HEK293 (cell line): ENCODE measurements at regions of chr1 and their contacts with region 1.

Region 1: GRCh38 chr1:214213136-214213535 is 67.8 kb upstream of the SMYD2 start:
- H3K4me3 ChIP-seq: no peak overlapping the region
- H3K27ac ChIP-seq: no peak overlapping the region
- H3K4me1 ChIP-seq: no peaks in the 10 kb centered on the region
- CTCF ChIP-seq: no peak

Region 2: DNA sequence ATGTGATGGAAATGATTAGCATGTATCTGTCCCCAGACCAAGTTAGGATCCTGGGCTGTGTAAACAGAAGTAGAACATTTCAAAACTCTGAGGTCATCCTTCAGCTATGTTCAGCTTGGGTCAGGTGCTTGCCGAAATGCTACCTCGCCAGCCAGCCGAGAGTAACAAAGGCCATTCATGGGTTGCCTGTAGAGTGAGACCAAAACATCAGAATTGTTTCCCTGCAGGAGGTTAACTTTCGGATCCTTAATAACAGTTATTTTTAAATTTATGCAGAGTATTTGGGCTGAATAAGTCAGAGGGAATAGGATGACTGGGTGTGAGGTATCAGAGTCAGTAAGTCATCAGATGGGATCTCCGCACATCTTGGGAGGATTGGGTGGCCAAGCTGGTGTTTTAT is 103.5 kb after region 1 on chr1:
- CTCF ChIA-PET with region 1: interaction called, 11 read pairs
- POLR2A ChIA-PET with region 1: no interaction called
- H3K4me3 ChIP-seq: no peak overlapping the region
- H3K27ac ChIP-seq: no peak overlapping the region
- H3K4me1 ChIP-seq: no peaks in the 10 kb centered on the region
- CTCF ChIP-seq: no peak

Region 3: GRCh38 chr1:214321705-214322453 is 108.7 kb after region 1 on chr1:
- CTCF ChIA-PET with region 1: interaction called, 186 read pairs
- POLR2A ChIA-PET with region 1: no interaction called
- H3K4me3 ChIP-seq: no peak overlapping the region
- H3K27ac ChIP-seq: no peak overlapping the region
- H3K4me1 ChIP-seq: no peaks in the 10 kb centered on the region
- CTCF ChIP-seq: no peak

Region 4: DNA sequence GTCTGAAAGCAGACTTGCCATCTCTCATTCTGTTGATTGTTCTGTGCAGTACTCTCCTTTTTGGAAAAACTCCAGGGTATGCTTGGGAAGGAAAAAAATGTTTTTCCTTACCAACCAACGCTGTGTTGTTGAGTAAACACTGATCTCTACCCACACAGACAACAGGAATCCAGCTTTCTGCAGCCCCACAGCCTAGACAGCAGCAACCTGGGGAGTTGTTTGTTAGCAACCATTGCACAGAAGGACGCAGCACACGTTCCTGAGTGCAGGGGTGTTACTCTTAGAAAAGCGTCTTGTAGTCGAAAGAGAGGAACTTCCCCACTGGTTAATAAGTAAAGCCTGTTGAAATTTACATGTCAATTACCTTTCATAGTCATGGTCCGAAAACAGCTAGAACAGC is 124.4 kb after region 1 on chr1:
- CTCF ChIA-PET with region 1: interaction called, 186 read pairs
- POLR2A ChIA-PET with region 1: no interaction called
- H3K4me3 ChIP-seq: no peak overlapping the region
- H3K27ac ChIP-seq: no peak overlapping the region
- H3K4me1 ChIP-seq: no peaks in the 10 kb centered on the region
- CTCF ChIP-seq: no peak